GM12878 (cell line): ENCODE measurements at regions of chr13 and their contacts with region 1.

Region 1: DNA sequence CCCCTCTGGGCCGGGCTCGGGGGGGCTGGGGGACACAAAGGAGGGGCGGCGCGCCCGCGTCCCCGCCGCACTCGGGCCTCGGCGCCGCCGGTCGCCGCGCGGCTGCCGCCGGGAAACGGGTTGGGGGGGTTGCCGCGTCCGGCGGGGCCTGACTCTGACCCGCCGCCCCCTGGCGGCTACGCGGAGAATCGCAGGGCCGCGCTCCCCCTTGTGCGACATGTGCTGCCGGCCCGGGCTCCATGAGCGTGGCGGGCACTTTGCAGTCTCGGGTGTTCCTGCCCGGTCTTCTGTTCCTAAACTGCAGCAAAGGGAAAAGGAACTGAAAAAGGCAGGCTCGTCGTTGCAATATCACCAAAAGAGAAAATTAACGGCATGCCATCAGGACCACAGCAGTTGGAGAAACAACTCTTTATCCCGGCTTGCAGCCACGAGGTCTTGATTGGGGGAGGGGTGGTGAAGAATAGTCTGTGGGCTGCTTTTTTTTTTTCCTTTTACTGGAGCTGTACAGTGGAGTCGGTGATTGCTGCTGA is 1.5 kb downstream of the MIR17HG start:
- DNase-seq: peak; percentile 43
- ATAC-seq: peak; percentile 54
- H3K4me3 ChIP-seq: peak overlapping the region; percentile 91
- H3K27ac ChIP-seq: peak overlapping the region; percentile 86
- H3K4me1 ChIP-seq: peaks cover 6% of the 10 kb centered on the region; the same call in 1 of the 2 replicates
- H3K27me3 ChIP-seq: no peaks in the 10 kb centered on the region
- CTCF ChIP-seq: peak; percentile 90 to 97 (median 94)
- EP300 ChIP-seq: no peak
- POLR2A ChIP-seq: peak; percentile 6; the same call in 1 of the 2 replicates
- RAD21 ChIP-seq: peak; percentile 52

Region 2: GRCh38 chr13:91126806-91127205 is 222.2 kb before region 1 on chr13:
- CTCF ChIA-PET with region 1: no interaction called
- POLR2A ChIA-PET with region 1: no interaction called
- RAD21 ChIA-PET with region 1: no interaction called
- SMC1A ChIA-PET with region 1: no interaction called
- in situ Hi-C with region 1: no loop called
- intact Hi-C with region 1: no loop called
- DNase-seq: no peak
- ATAC-seq: no peak
- H3K4me3 ChIP-seq: no peak overlapping the region
- H3K27ac ChIP-seq: no peak overlapping the region
- H3K4me1 ChIP-seq: peaks cover 3% of the 10 kb centered on the region; the same call in 1 of the 2 replicates
- H3K27me3 ChIP-seq: no peaks in the 10 kb centered on the region
- CTCF ChIP-seq: no peak
- EP300 ChIP-seq: no peak
- POLR2A ChIP-seq: no peak
- RAD21 ChIP-seq: no peak

Region 3: GRCh38 chr13:91291078-91291477 is 57.9 kb before region 1 on chr13:
- CTCF ChIA-PET with region 1: no interaction called
- POLR2A ChIA-PET with region 1: no interaction called
- RAD21 ChIA-PET with region 1: no interaction called
- SMC1A ChIA-PET with region 1: no interaction called
- in situ Hi-C with region 1: no loop called
- intact Hi-C with region 1: no loop called
- DNase-seq: no peak
- ATAC-seq: peak; percentile 52; the same call in 2 of the 3 replicates
- H3K4me3 ChIP-seq: no peak overlapping the region
- H3K27ac ChIP-seq: no peak overlapping the region
- H3K4me1 ChIP-seq: no peaks in the 10 kb centered on the region
- H3K27me3 ChIP-seq: no peaks in the 10 kb centered on the region
- CTCF ChIP-seq: peak in 1 of 3 experiments; percentile 15; a peak in 1 of 6 replicates
- EP300 ChIP-seq: no peak
- POLR2A ChIP-seq: no peak
- RAD21 ChIP-seq: no peak

Region 4: DNA sequence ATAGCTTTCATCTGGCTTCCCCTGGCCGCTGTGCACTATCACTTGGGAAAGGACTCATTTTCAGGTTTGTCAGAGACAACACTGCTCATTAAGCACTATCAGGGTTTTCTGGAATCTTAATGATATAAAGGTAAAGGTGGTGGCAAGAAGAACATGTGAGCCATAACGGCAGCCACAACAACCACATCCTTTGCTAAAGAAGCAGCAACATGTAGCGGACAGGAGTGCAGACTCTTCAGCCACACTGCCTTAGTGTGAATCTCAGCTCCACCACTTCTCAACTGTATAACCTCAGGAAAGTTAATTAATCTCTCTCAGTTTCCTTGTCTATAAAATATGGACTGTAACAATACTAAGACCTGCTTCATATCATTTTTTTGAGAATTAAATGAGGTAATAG is 25.6 kb before region 1 on chr13:
- CTCF ChIA-PET with region 1: interaction called, 11 read pairs
- POLR2A ChIA-PET with region 1: interaction called, 5 read pairs
- RAD21 ChIA-PET with region 1: interaction called, 3 read pairs
- SMC1A ChIA-PET with region 1: interaction called, 5 read pairs
- in situ Hi-C with region 1: no loop called
- intact Hi-C with region 1: no loop called
- DNase-seq: no peak
- ATAC-seq: peak; percentile 62
- H3K4me3 ChIP-seq: no peak overlapping the region
- H3K27ac ChIP-seq: no peak overlapping the region
- H3K4me1 ChIP-seq: no peaks in the 10 kb centered on the region
- H3K27me3 ChIP-seq: no peaks in the 10 kb centered on the region
- CTCF ChIP-seq: no peak
- EP300 ChIP-seq: no peak
- POLR2A ChIP-seq: no peak
- RAD21 ChIP-seq: no peak

Region 5: GRCh38 chr13:91331047-91331915 is 17.7 kb before region 1 on chr13:
- CTCF ChIA-PET with region 1: interaction called, 11 read pairs
- POLR2A ChIA-PET with region 1: interaction called, 15 read pairs
- RAD21 ChIA-PET with region 1: interaction called, 31 read pairs
- SMC1A ChIA-PET with region 1: interaction called, 39 read pairs
- in situ Hi-C with region 1: no loop called
- intact Hi-C with region 1: loop called (anchors 2 kb)
- DNase-seq: no peak
- ATAC-seq: peak; percentile 91
- H3K4me3 ChIP-seq: peak overlapping the region; percentile 68; the same call in 1 of the 2 replicates
- H3K27ac ChIP-seq: peak overlapping the region; percentile 71
- H3K4me1 ChIP-seq: peaks cover 15% of the 10 kb centered on the region
- H3K27me3 ChIP-seq: no peaks in the 10 kb centered on the region
- CTCF ChIP-seq: no peak
- EP300 ChIP-seq: no peak
- POLR2A ChIP-seq: no peak
- RAD21 ChIP-seq: no peak

Region 6: GRCh38 chr13:91398413-91399272 is 49.7 kb after region 1 on chr13 and contains the start of gene GPC5:
- CTCF ChIA-PET with region 1: no interaction called
- POLR2A ChIA-PET with region 1: no interaction called
- RAD21 ChIA-PET with region 1: no interaction called
- SMC1A ChIA-PET with region 1: no interaction called
- in situ Hi-C with region 1: no loop called
- intact Hi-C with region 1: no loop called
- DNase-seq: no peak
- ATAC-seq: peak; percentile 98
- H3K4me3 ChIP-seq: peak within 1 kb of the TSS; percentile 67
- H3K27ac ChIP-seq: peak within 1 kb of the TSS; percentile 14
- H3K4me1 ChIP-seq: no peaks in the 10 kb centered on the region
- H3K27me3 ChIP-seq: peaks cover 0 to 6% of the 10 kb centered on the region in 2 experiments; a peak in 2 of 4 replicates
- CTCF ChIP-seq: no peak
- EP300 ChIP-seq: no peak
- POLR2A ChIP-seq: peak; percentile 49
- RAD21 ChIP-seq: no peak
- polyA plus RNA-seq, gene GPC5: 0.05 TPM in 1 of 2 experiments, not detected in the other